ENCODE measurements at regions of chr7 and their contacts with region 1.

Region 1: DNA sequence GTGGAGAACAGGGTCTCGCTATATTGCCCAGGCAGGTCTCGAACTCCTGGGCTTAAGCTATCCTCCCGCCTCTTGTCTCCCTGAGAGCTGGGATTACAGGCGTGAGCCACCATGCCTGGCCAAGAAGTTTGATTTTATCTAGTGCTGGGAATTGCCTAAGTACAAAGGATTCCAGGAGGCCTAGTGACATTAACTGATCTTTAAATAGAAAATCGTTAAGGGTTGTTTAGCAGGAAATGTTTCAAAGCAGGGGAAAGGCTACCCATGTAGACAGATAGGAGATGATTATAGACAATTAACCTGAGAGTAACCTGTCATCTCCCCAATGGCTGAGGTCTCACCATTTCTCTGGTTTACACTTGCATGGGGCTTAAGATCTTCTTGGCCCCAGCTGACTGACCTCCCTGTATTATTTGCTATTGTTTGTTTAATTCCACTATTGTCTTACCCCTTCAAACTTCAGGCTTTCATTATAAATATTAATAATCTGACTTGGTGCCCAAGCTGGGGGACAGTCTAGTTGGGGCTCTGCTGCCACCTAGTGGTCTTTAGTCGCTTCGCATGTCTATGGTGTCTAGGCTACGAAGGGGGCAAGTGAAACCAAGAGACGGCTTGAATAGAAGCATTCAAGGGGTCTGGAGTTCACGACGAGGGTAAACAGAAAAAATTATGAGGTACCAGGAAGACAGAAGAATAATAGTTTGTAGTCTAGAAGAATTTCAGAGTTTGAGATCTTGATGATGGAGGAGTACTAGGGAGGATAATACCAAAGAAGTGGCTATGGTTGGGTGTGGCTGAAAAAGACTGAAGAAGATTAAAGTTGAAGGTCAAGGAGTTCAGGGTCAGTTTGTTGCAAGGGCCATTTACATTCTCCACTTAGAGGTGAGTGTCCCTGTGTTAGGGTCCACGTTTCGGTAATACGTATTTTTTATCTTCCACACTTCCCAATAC is 40.4 kb upstream of the BPGM start:
- DNase-seq: peak; percentile 73
- ATAC-seq: peak; percentile 93
- H3K4me3 Mint-ChIP-seq: peak overlapping the region; percentile 59
- H3K27ac Mint-ChIP-seq: no peak overlapping the region
- H3K4me1 Mint-ChIP-seq: peaks cover 10% of the 10 kb centered on the region
- H3K27me3 Mint-ChIP-seq: peaks cover 63% of the 10 kb centered on the region

Region 2: DNA sequence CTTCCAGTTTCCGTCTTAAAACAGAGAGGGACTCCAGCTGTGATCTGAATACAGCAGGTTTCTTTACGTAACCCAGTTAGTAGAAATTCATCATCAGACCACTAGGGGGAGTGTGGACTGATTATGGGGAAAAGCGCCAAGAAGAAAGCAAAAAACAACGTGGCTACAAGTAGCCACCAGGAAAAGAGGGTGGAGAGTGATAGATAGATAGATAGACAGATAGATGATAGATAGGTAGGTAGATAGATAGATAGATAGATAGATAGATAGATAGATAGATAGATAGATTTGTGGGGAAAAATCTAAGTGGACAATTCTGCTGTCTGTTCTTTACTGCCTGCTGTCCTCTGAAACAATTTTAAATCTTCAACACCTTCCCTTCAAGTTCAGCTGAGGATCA is 91.6 kb before region 1 on chr7:
- CTCF ChIA-PET with region 1: interaction called, 16 read pairs
- DNase-seq: no peak
- ATAC-seq: peak; percentile 74
- H3K4me3 Mint-ChIP-seq: no peak overlapping the region
- H3K27ac Mint-ChIP-seq: no peak overlapping the region
- H3K4me1 Mint-ChIP-seq: peaks cover 8% of the 10 kb centered on the region
- H3K27me3 Mint-ChIP-seq: peaks cover 23% of the 10 kb centered on the region

Region 3: GRCh38 chr7:134646425-134647305 is 40.4 kb after region 1 on chr7 and contains the start of gene BPGM:
- CTCF ChIA-PET with region 1: interaction called, 10 read pairs
- DNase-seq: peak; percentile 98
- ATAC-seq: peak; percentile 99
- H3K4me3 Mint-ChIP-seq: no peak within 1 kb of the TSS
- H3K27ac Mint-ChIP-seq: no peak within 1 kb of the TSS
- H3K4me1 Mint-ChIP-seq: peaks cover 35% of the 10 kb centered on the region
- H3K27me3 Mint-ChIP-seq: no peaks in the 10 kb centered on the region
- total RNA-seq, gene BPGM: 18.6 to 19.7 TPM